Esophagus muscularis mucosa (tissue), 4 donors: ENCODE measurements at regions of chr10 and their contacts with region 1.

Region 1: GRCh38 chr10:88971221-88972061 is 18.9 kb upstream of the ACTA2 start:
- DNase-seq: no peak
- H3K4me3 ChIP-seq: peak overlapping the region in 3 of 4 donors; percentile 23 to 31 (median 28)
- H3K27ac ChIP-seq: peak overlapping the region; percentile 75 to 79 (median 77)
- H3K4me1 ChIP-seq: peaks cover 30 to 86% (median 81%) of the 10 kb centered on the region in 4 donors
- H3K27me3 ChIP-seq: no peaks in the 10 kb centered on the region
- CTCF ChIP-seq: no peak
- EP300 ChIP-seq: no peak
- POLR2A ChIP-seq: no peak

Region 2: GRCh38 chr10:88953662-88954061 is 17.8 kb before region 1 on chr10:
- intact Hi-C with region 1: loop called (anchors 2 kb)
- DNase-seq: no peak
- H3K4me3 ChIP-seq: peak overlapping the region; percentile 54 to 70 (median 64)
- H3K27ac ChIP-seq: peak overlapping the region; percentile 91 to 96 (median 94)
- H3K4me1 ChIP-seq: peaks cover 11 to 41% (median 37%) of the 10 kb centered on the region in 4 donors
- H3K27me3 ChIP-seq: no peaks in the 10 kb centered on the region
- CTCF ChIP-seq: no peak
- EP300 ChIP-seq: no peak
- POLR2A ChIP-seq: no peak

Region 3: GRCh38 chr10:89053555-89053954 is 82.1 kb after region 1 on chr10:
- intact Hi-C with region 1: no loop called
- DNase-seq: no peak
- H3K4me3 ChIP-seq: no peak overlapping the region
- H3K27ac ChIP-seq: no peak overlapping the region
- H3K4me1 ChIP-seq: peaks cover 0 to 9% (median 3%) of the 10 kb centered on the region in 4 donors
- H3K27me3 ChIP-seq: no peaks in the 10 kb centered on the region
- CTCF ChIP-seq: no peak
- EP300 ChIP-seq: no peak
- POLR2A ChIP-seq: no peak